Vagina (tissue), 2 donors: ENCODE measurements at regions of chr11 and their contacts with region 1.

Region 1: GRCh38 chr11:121793291-121793690 is 322.7 kb downstream of the BLID start:
- DNase-seq: no peak
- H3K4me3 ChIP-seq: no peak overlapping the region
- H3K27ac ChIP-seq: no peak overlapping the region
- H3K4me1 ChIP-seq: peaks cover 6% of the 10 kb centered on the region
- H3K27me3 ChIP-seq: no peaks in the 10 kb centered on the region
- CTCF ChIP-seq: no peak
- POLR2A ChIP-seq: no peak

Region 2: DNA sequence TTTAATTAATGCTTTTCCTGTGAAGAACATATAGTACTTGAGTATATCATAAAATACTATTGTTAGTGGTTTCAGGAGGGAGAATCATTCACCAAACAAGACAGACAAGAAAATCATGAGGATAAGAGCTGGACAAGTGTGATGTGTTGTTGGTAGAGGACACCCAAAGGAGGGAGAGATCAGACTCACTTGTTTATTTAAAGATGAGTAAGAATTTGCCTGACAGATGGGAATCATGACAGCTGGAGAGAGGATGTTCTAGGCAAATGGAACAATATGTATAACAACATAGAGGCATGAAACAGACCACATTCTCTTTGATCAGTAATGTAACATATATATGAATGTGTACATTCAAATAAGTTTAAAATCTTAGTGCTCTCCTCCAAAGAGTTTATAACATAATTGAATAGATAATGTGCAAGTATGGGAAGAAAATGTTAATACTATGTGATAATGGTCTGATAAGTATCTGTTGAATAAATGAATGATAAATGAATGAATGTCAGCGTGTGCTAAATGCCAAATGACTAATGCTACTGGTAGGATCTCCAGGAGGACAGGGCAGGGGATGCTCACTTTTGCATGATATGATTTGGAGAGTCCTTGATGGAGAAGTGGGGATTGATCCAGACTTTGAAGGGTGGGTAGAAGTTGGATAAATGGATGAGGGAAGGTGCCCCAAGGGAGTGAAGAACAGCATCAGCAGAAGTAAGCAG is 111.6 kb before region 1 on chr11:
- intact Hi-C with region 1: no loop called
- DNase-seq: no peak
- H3K4me3 ChIP-seq: no peak overlapping the region
- H3K27ac ChIP-seq: no peak overlapping the region
- H3K4me1 ChIP-seq: no peaks in the 10 kb centered on the region
- H3K27me3 ChIP-seq: no peaks in the 10 kb centered on the region
- CTCF ChIP-seq: no peak
- POLR2A ChIP-seq: no peak

Region 3: GRCh38 chr11:121904148-121904547 is 110.9 kb after region 1 on chr11:
- intact Hi-C with region 1: loop called (anchors 1 kb)
- DNase-seq: no peak
- H3K4me3 ChIP-seq: no peak overlapping the region
- H3K27ac ChIP-seq: no peak overlapping the region
- H3K4me1 ChIP-seq: no peaks in the 10 kb centered on the region
- H3K27me3 ChIP-seq: no peaks in the 10 kb centered on the region
- CTCF ChIP-seq: no peak
- POLR2A ChIP-seq: no peak